ENCODE measurements at regions of chr6 and their contacts with region 1.

Region 1: GRCh38 chr6:25147223-25147622 is 132.0 kb upstream of the CARMIL1 start:
- DNase-seq: no peak
- H3K4me3 Mint-ChIP-seq: peak overlapping the region; percentile 24
- H3K27ac Mint-ChIP-seq: peak overlapping the region; percentile 74
- H3K4me1 Mint-ChIP-seq: peaks cover 68% of the 10 kb centered on the region
- H3K27me3 Mint-ChIP-seq: no peaks in the 10 kb centered on the region

Region 2: GRCh38 chr6:25166955-25167748 is 19.9 kb after region 1 on chr6:
- intact Hi-C with region 1: loop called (anchors 1 kb)
- DNase-seq: no peak
- H3K4me3 Mint-ChIP-seq: peak overlapping the region; percentile 91
- H3K27ac Mint-ChIP-seq: peak overlapping the region; percentile 97
- H3K4me1 Mint-ChIP-seq: peaks cover 69% of the 10 kb centered on the region
- H3K27me3 Mint-ChIP-seq: no peaks in the 10 kb centered on the region

Region 3: DNA sequence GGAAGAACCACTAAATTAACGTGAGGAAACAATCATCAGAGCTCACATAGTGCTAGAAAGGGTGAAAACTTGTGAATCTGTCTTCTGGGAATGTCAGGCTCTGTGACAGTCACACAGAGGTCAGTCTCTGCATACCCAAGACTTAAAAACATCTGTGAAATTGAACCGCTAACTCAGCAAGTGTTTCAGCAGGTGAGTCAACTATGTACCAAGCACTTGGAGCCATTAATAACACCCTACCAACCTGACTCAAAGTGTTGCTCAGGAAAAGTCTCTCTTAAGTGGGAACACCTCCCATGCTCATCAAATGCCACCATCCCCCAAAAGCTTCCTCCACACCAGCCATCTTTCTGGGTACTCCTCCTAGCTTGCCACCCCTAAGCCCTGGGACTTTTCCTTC is 39.7 kb after region 1 on chr6:
- intact Hi-C with region 1: no loop called
- DNase-seq: no peak
- H3K4me3 Mint-ChIP-seq: no peak overlapping the region
- H3K27ac Mint-ChIP-seq: no peak overlapping the region
- H3K4me1 Mint-ChIP-seq: peaks cover 6% of the 10 kb centered on the region
- H3K27me3 Mint-ChIP-seq: peaks cover 17% of the 10 kb centered on the region

Measured in activated T-helper 2 cell treated with anti-CD3 and anti-CD28 coated beads, Interferon-gamma antibody, Interleukin-2, Interleukin-4, amounts not matched to agents 10 μg/mL and 5 μg/mL and 100 μg/mL, durations not matched to agents 14 hours and 24 hours and 36 hours (primary cell).